Activated CD4-positive, alpha-beta T cell treated with anti-CD3 and anti-CD28 coated beads, Interleukin-2, amount 10 ng/mL, durations not matched to agents 24 days and 14 days (primary cell): ENCODE measurements at regions of chr12 and their contacts with region 1.

Region 1: DNA sequence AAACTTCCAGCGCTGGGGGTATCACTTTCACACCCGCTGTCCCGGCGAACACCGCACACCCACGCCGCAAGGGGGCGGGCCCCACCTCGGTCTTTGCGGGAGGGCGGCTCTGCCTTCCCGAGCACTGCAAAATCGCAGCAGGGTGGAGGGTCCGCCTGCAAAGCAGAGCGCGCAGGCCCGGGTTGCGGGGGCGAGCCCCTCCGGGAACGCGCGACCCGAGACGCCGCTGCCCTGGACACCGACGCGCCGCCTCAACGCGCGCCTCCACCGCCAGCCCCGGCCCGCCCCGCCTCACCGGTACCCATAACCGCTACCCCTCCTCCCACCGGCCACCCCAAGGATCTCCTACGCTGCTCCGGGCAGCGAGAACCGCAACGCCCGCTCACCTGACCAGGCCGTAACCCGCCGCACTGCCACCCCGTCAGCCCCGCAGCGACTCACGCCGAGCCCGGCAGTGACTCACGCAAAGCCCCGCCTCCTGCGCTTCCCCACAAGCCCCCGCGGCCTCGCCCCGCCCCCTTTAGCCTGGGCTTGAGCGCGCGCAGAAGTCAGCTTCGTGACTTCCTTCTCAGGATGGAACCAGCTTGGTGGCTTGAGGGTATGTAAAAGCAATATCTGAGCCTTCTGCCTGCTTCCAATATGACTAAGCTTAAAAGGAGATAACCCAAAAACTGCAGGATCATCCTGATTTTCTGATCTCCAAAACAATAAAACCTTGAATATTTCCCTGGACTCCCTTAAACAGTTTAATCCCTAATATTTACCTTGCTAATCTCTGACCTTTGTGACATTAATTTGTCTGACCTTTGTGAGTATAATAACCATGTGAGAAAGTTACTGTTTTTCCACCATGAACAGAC is at the start of gene RPAP3:
- DNase-seq: peak; percentile 99
- H3K4me3 Mint-ChIP-seq: peak within 1 kb of the TSS; percentile 97
- H3K27ac Mint-ChIP-seq: peak within 1 kb of the TSS; percentile 99
- H3K4me1 Mint-ChIP-seq: peaks cover 53% of the 10 kb centered on the region
- H3K27me3 Mint-ChIP-seq: no peaks in the 10 kb centered on the region
- total RNA-seq, gene RPAP3: 63.4 and 67.3 TPM in 2 replicates

Region 2: DNA sequence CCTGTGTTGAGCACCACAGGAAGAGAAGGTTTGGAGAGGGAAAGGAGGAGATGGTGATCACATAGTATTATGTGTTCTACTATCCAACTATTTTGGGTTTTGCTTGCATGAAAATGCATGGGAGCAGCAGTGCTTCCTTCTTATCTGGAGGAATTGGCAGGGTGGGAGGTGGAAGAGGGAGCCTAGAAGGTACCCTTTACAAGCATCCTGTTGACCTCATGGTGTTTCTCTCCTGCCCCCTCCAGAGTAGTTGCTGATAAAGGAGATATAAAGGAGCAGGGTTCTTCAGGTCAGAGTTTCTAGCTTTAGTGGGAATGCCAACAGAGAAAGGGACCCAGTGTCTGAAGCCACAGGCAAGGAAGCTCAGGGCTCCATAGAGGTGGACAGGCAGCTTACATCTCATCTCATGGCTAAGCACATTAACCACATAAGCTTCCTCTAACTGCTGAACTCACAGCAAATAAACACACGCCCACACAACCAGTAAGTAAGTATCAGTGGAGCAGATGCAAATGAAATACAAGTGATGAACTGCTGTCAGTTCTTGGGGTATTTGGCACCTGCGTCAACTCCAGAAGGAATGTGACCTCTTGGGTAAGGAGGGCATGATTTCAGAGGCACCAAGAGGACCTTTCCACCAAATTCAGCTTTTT is 1159.0 kb before region 1 on chr12:
- intact Hi-C with region 1: loop called (anchors 10 kb)
- DNase-seq: peak; percentile 79
- H3K4me3 Mint-ChIP-seq: peak overlapping the region; percentile 55
- H3K27ac Mint-ChIP-seq: peak overlapping the region; percentile 88
- H3K4me1 Mint-ChIP-seq: peaks cover 62% of the 10 kb centered on the region
- H3K27me3 Mint-ChIP-seq: no peaks in the 10 kb centered on the region

Region 3: DNA sequence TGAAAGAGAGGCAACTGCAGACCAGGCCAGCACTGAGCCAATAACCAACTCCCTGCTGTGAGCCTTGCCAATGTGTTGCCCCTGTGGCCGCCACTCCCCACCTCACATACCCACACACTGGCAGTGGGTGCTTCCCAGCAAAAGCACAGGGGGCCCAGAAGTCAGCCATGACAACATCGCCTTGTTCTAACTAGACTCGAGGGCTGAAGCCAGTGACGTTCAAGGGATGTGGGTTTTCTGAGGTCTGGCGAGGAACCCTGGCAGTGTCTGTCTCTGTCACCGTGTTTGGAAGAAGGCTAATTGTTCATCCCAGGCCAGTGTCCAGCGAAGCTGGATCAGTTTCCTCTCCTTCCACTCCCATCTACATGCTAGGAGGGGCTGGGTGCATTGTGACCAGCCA is 314.2 kb before region 1 on chr12:
- intact Hi-C with region 1: loop called (anchors 5 kb)
- DNase-seq: peak; percentile 88
- H3K4me3 Mint-ChIP-seq: peak overlapping the region; percentile 81
- H3K27ac Mint-ChIP-seq: peak overlapping the region; percentile 99
- H3K4me1 Mint-ChIP-seq: peaks cover 77% of the 10 kb centered on the region
- H3K27me3 Mint-ChIP-seq: no peaks in the 10 kb centered on the region

Region 4: GRCh38 chr12:47422611-47423010 is 283.2 kb before region 1 on chr12:
- intact Hi-C with region 1: no loop called
- DNase-seq: no peak
- H3K4me3 Mint-ChIP-seq: no peak overlapping the region
- H3K27ac Mint-ChIP-seq: no peak overlapping the region
- H3K4me1 Mint-ChIP-seq: peaks cover 18% of the 10 kb centered on the region
- H3K27me3 Mint-ChIP-seq: no peaks in the 10 kb centered on the region

Region 5: GRCh38 chr12:47602325-47602724 is 103.5 kb before region 1 on chr12:
- intact Hi-C with region 1: no loop called
- DNase-seq: no peak
- H3K4me3 Mint-ChIP-seq: no peak overlapping the region
- H3K27ac Mint-ChIP-seq: no peak overlapping the region
- H3K4me1 Mint-ChIP-seq: peaks cover 4% of the 10 kb centered on the region
- H3K27me3 Mint-ChIP-seq: no peaks in the 10 kb centered on the region

Region 6: GRCh38 chr12:47616440-47616839 is 89.4 kb before region 1 on chr12:
- intact Hi-C with region 1: no loop called
- DNase-seq: no peak
- H3K4me3 Mint-ChIP-seq: no peak overlapping the region
- H3K27ac Mint-ChIP-seq: no peak overlapping the region
- H3K4me1 Mint-ChIP-seq: no peaks in the 10 kb centered on the region
- H3K27me3 Mint-ChIP-seq: no peaks in the 10 kb centered on the region

Region 7: GRCh38 chr12:47758834-47759690 is 53.3 kb after region 1 on chr12 and contains the start of gene RAPGEF3:
- intact Hi-C with region 1: loop called (anchors 1 kb)
- DNase-seq: peak; percentile 91
- H3K4me3 Mint-ChIP-seq: peak within 1 kb of the TSS; percentile 82
- H3K27ac Mint-ChIP-seq: peak within 1 kb of the TSS; percentile 60
- H3K4me1 Mint-ChIP-seq: peaks cover 59% of the 10 kb centered on the region
- H3K27me3 Mint-ChIP-seq: peaks cover 2% of the 10 kb centered on the region
- total RNA-seq, gene RAPGEF3: 3.6 and 4.5 TPM in 2 replicates

Region 8: DNA sequence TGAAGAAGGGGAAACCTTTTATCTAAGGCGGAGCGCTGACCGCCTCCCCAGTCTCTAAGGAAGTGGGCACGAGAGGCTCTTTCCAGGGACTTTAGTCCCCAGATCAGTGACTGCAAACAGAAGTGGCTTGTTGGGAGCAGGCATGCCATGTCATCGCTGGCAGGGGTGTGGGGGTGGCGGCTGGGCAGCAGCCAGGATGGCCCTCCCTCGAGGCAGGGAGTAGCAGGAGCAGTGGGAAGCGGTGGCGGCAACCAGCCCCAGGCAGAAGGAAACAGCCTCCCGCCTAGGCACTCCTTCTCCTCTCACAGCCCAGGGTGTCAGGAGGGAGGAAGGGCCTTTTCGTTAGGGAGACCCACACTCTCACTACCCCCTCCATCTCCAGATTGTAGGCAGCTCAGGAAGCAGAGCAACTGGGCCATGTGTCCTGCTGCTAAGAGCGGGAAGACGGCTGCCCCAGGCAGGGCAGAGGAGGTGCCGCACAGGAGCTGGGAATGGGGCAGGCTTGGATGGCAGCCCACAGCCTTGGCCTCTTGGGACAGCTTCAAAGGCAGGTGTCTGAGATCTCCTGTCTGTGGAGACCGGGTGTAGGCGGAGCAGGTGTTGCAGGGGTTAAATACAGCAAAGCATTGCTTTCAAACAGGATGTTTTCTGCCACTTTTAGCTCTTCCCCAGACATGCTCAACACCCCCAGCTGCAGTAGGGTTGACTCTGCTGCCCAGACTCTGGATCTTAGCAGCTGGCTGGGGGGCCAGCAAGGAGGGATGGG is 177.2 kb after region 1 on chr12:
- intact Hi-C with region 1: loop called (anchors 2 kb)
- DNase-seq: peak; percentile 84
- H3K4me3 Mint-ChIP-seq: peak overlapping the region; percentile 95
- H3K27ac Mint-ChIP-seq: peak overlapping the region; percentile 99
- H3K4me1 Mint-ChIP-seq: peaks cover 81% of the 10 kb centered on the region
- H3K27me3 Mint-ChIP-seq: no peaks in the 10 kb centered on the region